Activated naive CD4-positive, alpha-beta T cell treated with anti-CD3 and anti-CD28 coated beads for 36 hours (primary cell): ENCODE measurements at regions of chrX and their contacts with region 1.

Region 1: DNA sequence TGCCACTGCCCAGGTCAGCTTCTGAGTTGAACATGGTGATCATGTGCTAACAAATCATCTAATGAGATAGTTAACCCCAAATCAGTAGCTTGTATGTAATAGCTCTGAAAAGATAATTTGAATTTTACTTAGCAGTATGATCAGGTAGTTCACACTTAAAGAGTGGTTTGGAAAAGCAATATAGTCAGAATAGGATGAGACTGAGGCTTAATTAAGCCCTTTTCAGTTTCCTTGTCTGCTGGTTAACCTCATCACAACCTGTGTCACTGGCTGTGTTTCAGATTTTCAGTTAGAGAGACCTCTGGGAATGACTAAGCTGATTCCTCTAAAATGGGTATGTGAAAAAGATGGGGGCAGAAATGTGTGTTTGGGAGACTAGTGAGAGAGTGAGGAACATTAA is 38.1 kb downstream of the GPR174 start:
- DNase-seq: peak; percentile 32
- H3K4me3 Mint-ChIP-seq: peak overlapping the region; percentile 29
- H3K27ac Mint-ChIP-seq: peak overlapping the region; percentile 90
- H3K4me1 Mint-ChIP-seq: peaks cover 68% of the 10 kb centered on the region
- H3K27me3 Mint-ChIP-seq: no peaks in the 10 kb centered on the region

Region 2: GRCh38 chrX:78712336-78712735 is 470.3 kb before region 1 on chrX:
- CTCF ChIA-PET with region 1: no interaction called
- intact Hi-C with region 1: no loop called
- DNase-seq: no peak
- H3K4me3 Mint-ChIP-seq: no peak overlapping the region
- H3K27ac Mint-ChIP-seq: no peak overlapping the region
- H3K4me1 Mint-ChIP-seq: peaks cover 4% of the 10 kb centered on the region
- H3K27me3 Mint-ChIP-seq: no peaks in the 10 kb centered on the region

Region 3: DNA sequence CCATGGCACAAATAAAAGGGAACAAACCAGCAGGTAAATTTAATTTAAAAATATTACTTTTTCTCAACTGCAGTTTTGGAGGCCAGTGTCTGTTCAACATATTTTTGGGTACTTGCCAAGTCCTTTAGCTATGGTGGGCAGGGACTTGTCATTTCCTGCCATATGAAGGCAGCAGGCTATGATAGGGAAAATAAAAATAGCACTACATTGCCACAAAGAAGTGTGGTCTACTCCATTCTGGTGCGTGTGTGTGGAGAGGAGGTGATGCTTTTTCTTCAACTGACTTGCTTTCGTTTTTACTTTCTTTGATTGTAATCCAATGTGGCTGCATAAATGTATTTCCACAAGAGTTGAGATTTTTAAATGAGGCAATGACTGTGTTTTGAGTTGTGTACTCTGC is 21.0 kb before region 1 on chrX:
- CTCF ChIA-PET with region 1: no interaction called
- intact Hi-C with region 1: loop called (anchors 1 kb)
- DNase-seq: peak; percentile 51
- H3K4me3 Mint-ChIP-seq: peak overlapping the region; percentile 81
- H3K27ac Mint-ChIP-seq: peak overlapping the region; percentile 98
- H3K4me1 Mint-ChIP-seq: peaks cover 55% of the 10 kb centered on the region
- H3K27me3 Mint-ChIP-seq: no peaks in the 10 kb centered on the region

Region 4: GRCh38 chrX:79167462-79167861 is 15.2 kb before region 1 on chrX:
- CTCF ChIA-PET with region 1: interaction called, 6 read pairs
- intact Hi-C with region 1: loop called (anchors 1 kb)
- DNase-seq: no peak
- H3K4me3 Mint-ChIP-seq: peak overlapping the region; percentile 63
- H3K27ac Mint-ChIP-seq: peak overlapping the region; percentile 92
- H3K4me1 Mint-ChIP-seq: peaks cover 74% of the 10 kb centered on the region
- H3K27me3 Mint-ChIP-seq: no peaks in the 10 kb centered on the region

Region 5: GRCh38 chrX:79259073-79259689 is 76.6 kb after region 1 on chrX:
- CTCF ChIA-PET with region 1: interaction called, 3 read pairs
- intact Hi-C with region 1: loop called (anchors 1 kb)
- DNase-seq: peak; percentile 68
- H3K4me3 Mint-ChIP-seq: peak overlapping the region; percentile 58
- H3K27ac Mint-ChIP-seq: peak overlapping the region; percentile 91
- H3K4me1 Mint-ChIP-seq: peaks cover 83% of the 10 kb centered on the region
- H3K27me3 Mint-ChIP-seq: no peaks in the 10 kb centered on the region

Region 6: DNA sequence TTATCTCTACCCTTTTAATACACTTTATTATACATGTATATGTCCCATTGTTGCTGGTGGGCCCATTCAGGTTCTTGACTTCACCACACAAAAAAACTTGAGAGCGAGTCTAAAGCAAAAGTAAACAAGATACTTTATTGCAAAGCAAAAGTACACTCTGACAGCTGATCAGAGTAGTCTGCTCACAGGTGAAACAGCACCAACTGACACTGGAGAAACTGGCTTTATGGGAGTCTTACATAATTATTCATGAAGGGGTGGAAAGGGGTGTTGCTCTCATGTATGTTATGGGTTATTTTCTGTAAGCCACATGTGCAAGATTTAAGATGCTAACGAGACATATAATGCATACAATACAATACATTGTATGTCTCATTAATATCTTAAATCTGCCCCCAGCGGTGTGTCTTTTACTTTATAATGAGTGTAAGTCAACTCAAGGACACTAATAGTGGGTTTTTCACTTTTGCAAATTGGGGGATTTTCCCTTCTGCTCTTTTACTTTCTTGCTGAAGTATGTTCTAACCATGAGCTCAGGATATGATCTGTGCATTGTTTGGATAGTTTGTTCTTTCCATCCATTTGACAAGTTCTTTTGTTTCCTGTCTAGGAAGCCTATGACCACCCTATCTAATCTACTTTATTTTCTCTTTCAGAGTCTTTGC is 440.6 kb after region 1 on chrX:
- CTCF ChIA-PET with region 1: no interaction called
- intact Hi-C with region 1: no loop called
- DNase-seq: no peak
- H3K4me3 Mint-ChIP-seq: no peak overlapping the region
- H3K27ac Mint-ChIP-seq: no peak overlapping the region
- H3K4me1 Mint-ChIP-seq: no peaks in the 10 kb centered on the region
- H3K27me3 Mint-ChIP-seq: peaks cover 4% of the 10 kb centered on the region